RWPE1 (cell line): ENCODE measurements at regions of chr15 and their contacts with region 1.

Region 1: DNA sequence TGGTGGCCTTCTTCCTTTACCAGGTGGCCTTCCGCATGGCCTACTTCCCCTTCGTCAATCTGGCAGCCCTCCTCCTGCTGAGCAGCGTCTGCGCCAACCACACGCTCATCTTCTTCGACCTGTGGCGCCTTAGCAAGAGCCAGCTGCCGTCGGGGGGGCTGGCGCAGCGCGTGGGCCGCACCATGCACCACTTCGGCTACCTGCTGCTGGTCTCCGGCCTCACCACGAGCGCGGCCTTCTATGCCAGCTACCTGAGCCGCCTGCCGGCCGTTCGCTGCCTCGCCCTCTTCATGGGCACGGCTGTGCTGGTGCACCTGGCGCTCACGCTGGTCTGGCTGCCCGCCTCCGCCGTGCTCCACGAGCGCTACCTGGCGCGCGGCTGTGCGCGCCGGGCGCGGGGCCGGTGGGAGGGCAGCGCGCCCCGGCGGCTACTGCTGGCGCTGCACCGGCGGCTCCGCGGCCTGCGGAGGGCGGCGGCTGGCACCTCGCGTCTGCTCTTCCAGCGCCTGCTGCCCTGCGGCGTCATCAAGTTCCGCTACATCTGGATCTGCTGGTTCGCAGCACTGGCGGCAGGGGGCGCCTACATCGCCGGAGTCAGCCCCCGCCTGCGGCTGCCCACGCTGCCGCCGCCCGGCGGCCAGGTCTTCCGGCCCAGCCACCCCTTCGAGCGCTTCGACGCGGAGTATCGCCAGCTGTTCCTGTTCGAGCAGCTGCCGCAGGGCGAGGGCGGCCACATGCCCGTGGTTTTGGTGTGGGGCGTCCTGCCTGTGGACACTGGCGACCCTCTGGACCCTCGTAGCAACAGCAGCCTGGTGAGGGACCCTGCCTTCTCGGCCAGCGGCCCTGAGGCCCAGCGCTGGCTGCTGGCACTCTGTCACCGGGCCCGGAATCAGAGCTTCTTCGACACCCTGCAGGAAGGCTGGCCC is 9.9 kb downstream of the DISP2 start:
- DNase-seq: peak; percentile 80
- H3K27ac ChIP-seq: peak overlapping the region; percentile 40
- CTCF ChIP-seq: peak; percentile 100

Region 2: DNA sequence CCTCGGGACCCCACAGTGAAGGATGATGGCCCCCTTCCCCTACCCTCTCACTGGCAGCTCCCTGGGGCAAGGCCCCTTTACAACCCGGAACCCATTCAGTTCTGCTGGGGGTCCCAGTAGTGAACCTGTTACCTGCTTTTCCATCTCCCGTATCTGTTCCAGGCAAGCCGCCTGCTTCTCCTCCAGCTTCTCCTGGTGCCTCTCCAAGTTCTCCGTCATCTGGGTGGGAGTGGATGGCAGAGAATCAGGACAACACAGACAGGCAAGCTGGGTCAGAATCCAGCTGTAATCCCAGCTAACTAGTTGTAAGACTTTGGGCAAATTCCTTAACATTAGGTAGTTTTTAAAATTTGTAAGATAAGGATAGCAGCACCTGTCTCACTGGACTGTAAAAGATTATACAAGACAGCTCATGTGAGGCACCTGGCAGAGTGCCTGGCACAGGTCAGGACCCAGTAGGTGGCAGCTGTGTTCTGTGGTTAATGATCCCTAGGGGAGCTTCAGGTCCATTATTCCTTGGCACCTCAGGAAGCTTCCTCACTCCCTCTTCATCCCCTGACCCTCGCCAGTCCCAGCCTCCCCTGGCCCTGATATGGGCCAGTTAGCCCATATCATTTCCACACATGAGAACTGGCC is 78.7 kb before region 1 on chr15:
- CTCF ChIA-PET with region 1: interaction called, 18 read pairs
- POLR2A ChIA-PET with region 1: no interaction called
- DNase-seq: peak; percentile 63
- H3K27ac ChIP-seq: no peak overlapping the region
- CTCF ChIP-seq: no peak

Region 3: GRCh38 chr15:40323239-40323952 is 44.6 kb before region 1 on chr15 and contains the start of gene INAFM2:
- CTCF ChIA-PET with region 1: interaction called, 14 read pairs
- POLR2A ChIA-PET with region 1: interaction called, 3 read pairs
- DNase-seq: peak; percentile 90
- H3K27ac ChIP-seq: peak within 1 kb of the TSS; percentile 69
- CTCF ChIP-seq: no peak; the same call in 1 of the 2 replicates

Region 4: DNA sequence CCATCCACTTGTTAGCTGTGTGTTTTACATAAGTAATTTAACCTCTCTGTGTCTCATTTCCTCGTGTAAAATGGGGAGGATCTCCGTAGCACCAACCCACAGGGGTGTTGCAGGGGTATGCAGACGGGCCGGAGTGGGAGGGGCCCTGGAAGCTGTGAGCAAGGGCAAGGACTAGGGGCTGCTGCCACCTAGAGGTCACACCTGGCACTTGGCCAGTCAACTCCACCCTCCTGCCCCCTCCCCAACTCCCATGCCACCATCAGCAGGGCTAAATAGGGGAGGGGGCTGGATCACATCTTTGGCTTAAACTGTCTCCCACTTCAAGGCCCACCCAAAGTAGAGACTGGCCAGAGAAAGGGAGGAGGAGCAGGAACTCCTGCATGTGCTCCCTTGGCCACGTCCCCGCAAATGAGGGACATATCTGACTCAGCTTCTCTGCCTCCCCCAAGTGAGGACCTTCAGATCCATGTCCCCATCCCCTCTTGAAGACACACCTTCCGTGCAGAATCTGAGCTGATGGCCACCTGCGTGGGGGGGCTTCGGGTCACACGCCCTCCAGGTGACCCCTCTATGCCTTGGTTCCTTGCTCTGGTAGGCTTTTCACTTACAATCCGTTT is 29.8 kb before region 1 on chr15:
- CTCF ChIA-PET with region 1: interaction called, 112 read pairs
- POLR2A ChIA-PET with region 1: interaction called, 3 read pairs
- DNase-seq: peak; percentile 78
- H3K27ac ChIP-seq: peak overlapping the region; percentile 99
- CTCF ChIP-seq: peak; percentile 88

Region 5: GRCh38 chr15:40354408-40355171 is 13.4 kb before region 1 on chr15:
- CTCF ChIA-PET with region 1: interaction called, 10 read pairs
- POLR2A ChIA-PET with region 1: no interaction called
- DNase-seq: no peak
- H3K27ac ChIP-seq: no peak overlapping the region
- CTCF ChIP-seq: no peak

Region 6: GRCh38 chr15:40421246-40422157 is 53.6 kb after region 1 on chr15:
- CTCF ChIA-PET with region 1: interaction called, 16 read pairs
- POLR2A ChIA-PET with region 1: no interaction called
- DNase-seq: peak; percentile 69
- H3K27ac ChIP-seq: peak overlapping the region; percentile 67
- CTCF ChIP-seq: peak; percentile 95

Region 7: DNA sequence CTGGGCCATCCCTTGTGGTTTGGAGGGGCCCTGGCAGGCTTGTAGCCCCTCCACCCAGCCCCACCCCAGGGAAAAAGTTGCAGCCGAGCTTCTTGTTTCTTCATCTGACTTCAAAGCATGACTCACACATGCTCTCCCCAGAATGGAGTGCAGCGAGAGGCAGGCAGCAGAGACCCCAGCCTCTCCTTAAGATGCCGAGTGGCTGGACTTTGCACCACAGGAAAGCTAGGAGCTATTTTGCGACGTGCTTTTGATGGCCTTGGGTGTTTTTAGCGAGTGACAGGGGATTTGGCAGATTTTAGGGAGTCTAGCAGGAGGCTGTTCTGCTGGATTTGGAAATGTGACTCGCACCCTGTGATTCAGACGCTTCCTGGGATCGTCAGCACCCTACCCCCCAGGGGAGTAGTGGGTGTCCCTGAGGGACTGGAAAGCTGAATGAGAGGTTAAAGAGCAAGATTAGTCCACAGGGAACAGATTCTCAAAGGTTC is 87.0 kb after region 1 on chr15:
- CTCF ChIA-PET with region 1: no interaction called
- POLR2A ChIA-PET with region 1: no interaction called
- DNase-seq: peak; percentile 82
- H3K27ac ChIP-seq: peak overlapping the region; percentile 89
- CTCF ChIP-seq: no peak

Region 8: GRCh38 chr15:40470423-40471104 is 102.6 kb after region 1 on chr15 and contains the start of gene CHST14:
- CTCF ChIA-PET with region 1: no interaction called
- POLR2A ChIA-PET with region 1: no interaction called
- DNase-seq: peak; percentile 59
- H3K27ac ChIP-seq: peak within 1 kb of the TSS; percentile 79
- CTCF ChIP-seq: no peak

Region 9: GRCh38 chr15:41001524-41002214 is 633.7 kb after region 1 on chr15:
- CTCF ChIA-PET with region 1: no interaction called
- POLR2A ChIA-PET with region 1: no interaction called
- DNase-seq: no peak
- H3K27ac ChIP-seq: no peak overlapping the region
- CTCF ChIP-seq: no peak